Right ventricle myocardium superior (tissue), 1 donor: ENCODE measurements at regions of chr6 and their contacts with region 1.

Region 1: GRCh38 chr6:42043787-42044475 is 6.4 kb upstream of the TAF8 start:
- DNase-seq: peak; percentile 91
- ATAC-seq: peak; percentile 75

Region 2: GRCh38 chr6:41779793-41780545 is 264.0 kb before region 1 on chr6 and contains the start of gene FRS3:
- intact Hi-C with region 1: loop called (anchors 5 kb)
- DNase-seq: peak; percentile 99
- ATAC-seq: peak; percentile 96
- total RNA-seq, gene FRS3: 4.8 TPM

Region 3: DNA sequence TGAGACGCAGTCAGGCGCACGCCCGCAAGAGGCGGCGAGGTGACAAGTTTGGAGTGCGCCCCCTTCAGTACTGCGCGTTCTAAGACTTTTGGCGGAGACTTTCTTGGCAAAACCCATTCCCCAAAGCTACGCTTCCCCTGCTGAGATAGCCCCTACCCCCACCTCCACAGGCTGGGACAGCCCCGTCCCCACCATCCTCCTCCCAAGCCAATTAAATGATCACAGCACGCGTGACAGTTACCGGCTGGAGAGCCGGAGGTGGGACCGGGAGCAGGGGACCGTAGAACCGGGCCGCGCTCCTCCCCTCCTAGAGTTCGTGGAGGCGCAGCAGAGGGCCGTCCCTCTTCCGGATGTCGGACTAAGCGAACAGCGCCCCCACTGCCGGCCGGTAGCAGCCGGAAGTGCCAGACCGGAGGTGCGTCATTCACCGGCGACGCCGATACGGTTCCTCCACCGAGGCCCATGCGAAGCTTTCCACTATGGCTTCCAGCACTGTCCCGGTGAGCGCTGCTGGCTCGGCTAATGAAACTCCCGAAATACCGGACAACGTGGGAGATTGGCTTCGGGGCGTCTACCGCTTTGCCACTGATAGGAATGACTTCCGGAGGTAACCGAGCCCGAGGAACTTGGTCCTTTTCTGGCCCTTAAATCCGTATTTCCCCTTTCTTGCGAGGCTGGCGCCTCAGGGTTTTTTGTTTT is 256.6 kb before region 1 on chr6 and contains the start of gene TOMM6:
- intact Hi-C with region 1: loop called (anchors 5 kb)
- DNase-seq: peak; percentile 98
- ATAC-seq: peak; percentile 88
- total RNA-seq, gene TOMM6: 218 TPM

Region 4: GRCh38 chr6:41846666-41847237 is 197.2 kb before region 1 on chr6:
- intact Hi-C with region 1: loop called (anchors 5 kb)
- DNase-seq: no peak
- ATAC-seq: peak; percentile 92

Region 5: DNA sequence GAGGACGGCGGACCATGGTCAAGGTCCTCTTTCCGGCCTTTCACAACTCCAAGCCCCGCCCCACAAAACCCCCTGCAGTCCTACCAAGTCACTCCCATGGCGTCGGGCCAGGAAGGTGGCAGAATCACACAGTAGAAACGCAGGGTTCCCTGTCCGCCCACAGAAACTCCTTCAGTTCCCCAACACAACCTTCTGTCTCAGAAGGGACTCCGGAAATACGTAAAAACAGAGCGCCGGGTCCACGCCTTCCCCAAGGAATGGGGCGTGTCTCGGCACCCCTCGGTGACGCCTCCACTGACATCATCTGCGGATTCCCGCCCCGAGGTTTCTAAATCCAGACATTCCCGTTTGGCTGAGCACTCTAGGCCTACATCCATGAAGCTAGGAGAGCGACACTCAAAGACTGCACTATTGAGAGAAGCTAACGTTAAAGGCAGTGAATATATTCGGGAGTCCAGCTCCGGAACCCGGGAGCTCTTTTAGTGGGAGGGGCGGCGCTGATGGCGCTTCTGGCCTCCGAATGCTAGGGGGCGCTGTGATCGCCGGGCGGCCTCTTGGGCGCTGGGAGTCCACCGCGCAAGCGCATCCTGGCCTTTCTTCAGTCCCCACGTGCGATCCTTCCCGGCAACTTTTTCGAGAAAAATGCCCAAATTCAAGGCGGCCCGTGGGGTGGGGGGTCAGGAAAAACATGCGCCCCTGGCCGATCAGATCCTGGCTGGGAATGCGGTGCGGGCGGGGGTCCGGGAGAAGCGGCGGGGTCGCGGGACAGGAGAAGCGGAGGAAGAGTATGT is 122.8 kb before region 1 on chr6 and contains the starts of genes BYSL and MED20:
- intact Hi-C with region 1: loop called (anchors 5 kb)
- DNase-seq: peak; percentile 95
- ATAC-seq: peak; percentile 99
- total RNA-seq, gene BYSL: 9.0 TPM
- total RNA-seq, gene MED20: 19.8 TPM

Region 6: DNA sequence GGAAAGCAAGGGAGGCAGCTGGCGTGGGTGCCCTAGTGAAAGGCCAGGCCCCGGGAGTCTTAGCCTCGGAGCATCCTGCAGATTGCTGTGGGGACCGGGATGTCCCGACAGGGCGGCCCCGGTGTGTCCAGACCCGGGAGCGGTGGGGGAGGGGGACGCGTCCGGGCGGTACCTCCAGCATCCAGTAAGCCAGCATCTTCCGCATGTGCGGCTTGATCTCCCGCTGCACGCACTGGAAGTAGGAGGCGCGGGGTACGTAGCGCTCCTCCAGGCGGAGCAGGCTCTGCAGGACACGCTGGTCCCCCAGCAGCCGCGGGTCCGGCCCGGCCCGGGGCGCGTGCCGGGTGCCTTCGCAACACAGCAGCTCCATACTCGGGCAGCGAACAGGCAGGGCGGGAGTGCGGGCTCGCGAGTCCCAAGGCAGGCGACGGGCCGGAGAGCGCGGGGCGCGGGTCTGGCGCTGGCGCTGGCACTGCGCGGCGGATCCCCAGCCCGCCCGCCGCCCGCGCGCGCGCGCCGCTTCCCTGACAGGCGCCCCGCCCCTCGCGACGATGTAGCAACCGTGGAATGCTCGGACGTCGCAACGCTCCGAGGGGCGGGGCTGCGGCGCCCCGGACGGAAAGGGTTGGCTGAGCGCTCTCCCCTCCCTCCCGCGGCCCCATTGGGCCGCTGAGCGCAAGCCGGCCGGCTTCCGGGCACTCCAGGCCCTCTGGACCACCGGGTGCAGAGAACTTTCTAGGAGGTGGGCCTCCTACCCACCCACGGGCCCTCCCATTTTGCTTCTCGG is 102.5 kb before region 1 on chr6 and contains the start of gene CCND3:
- intact Hi-C with region 1: loop called (anchors 2 kb)
- DNase-seq: peak; percentile 97
- ATAC-seq: peak; percentile 94
- total RNA-seq, gene CCND3: 42.3 TPM